ENCODE measurements at regions of chr17 and their contacts with region 1.

Region 1: DNA sequence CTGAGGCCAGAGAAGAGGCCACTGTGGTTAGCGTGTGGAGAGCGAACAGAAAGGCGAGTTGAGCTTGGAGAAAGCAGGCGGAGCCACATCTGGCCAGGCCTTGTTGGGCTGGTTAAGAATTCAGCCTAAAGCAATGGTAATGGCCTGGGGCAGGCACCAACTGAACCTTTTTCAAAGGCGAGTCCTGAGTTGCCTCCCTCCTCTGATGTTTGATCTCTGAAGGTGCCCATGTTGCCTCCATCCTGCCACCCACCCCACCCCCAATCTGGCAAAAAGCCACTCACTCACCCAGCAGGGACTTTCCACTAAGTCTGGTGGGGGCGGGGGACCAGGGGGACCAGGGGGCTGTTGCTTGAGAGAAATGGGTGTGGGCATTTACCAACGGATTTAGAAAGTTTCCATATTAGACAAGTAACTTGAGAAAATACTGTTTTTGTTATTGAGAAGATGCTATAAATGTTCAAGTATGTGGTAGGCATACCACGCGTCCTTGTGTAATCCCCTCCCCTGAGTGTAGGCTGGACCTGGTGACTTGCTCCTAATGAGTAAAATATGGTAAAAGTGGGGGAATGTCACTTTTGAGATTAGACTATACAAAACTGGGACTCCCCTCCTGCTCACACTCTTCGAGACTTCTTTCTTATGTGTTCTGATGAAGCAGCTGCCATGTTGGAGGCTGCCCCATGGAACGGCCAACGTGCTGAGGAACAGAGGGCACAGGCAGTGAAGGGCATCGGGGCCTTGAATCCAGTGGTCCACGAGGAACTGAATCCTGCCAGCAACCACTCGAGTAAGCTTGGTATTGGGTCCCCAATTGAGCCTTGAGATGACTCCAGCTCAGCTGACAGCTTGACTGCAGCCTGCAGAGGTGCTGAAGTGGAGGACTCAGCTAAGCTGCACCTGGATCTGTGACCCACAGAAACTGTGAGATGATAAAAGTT is 29.9 kb upstream of the TNS4 start:
- DNase-seq: no peak
- H3K4me3 Mint-ChIP-seq: no peak overlapping the region
- H3K27ac Mint-ChIP-seq: no peak overlapping the region
- H3K4me1 Mint-ChIP-seq: peaks cover 19% of the 10 kb centered on the region
- H3K27me3 Mint-ChIP-seq: peaks cover 48% of the 10 kb centered on the region
- CTCF ChIP-seq: no peak

Region 2: GRCh38 chr17:39952680-39953470 is 578.4 kb before region 1 on chr17:
- CTCF ChIA-PET with region 1: interaction called, 16 read pairs
- intact Hi-C with region 1: no loop called
- DNase-seq: peak; percentile 100
- H3K4me3 Mint-ChIP-seq: peak overlapping the region; percentile 58
- H3K27ac Mint-ChIP-seq: peak overlapping the region; percentile 18
- H3K4me1 Mint-ChIP-seq: peaks cover 42% of the 10 kb centered on the region
- H3K27me3 Mint-ChIP-seq: peaks cover 15% of the 10 kb centered on the region
- CTCF ChIP-seq: no peak

Region 3: DNA sequence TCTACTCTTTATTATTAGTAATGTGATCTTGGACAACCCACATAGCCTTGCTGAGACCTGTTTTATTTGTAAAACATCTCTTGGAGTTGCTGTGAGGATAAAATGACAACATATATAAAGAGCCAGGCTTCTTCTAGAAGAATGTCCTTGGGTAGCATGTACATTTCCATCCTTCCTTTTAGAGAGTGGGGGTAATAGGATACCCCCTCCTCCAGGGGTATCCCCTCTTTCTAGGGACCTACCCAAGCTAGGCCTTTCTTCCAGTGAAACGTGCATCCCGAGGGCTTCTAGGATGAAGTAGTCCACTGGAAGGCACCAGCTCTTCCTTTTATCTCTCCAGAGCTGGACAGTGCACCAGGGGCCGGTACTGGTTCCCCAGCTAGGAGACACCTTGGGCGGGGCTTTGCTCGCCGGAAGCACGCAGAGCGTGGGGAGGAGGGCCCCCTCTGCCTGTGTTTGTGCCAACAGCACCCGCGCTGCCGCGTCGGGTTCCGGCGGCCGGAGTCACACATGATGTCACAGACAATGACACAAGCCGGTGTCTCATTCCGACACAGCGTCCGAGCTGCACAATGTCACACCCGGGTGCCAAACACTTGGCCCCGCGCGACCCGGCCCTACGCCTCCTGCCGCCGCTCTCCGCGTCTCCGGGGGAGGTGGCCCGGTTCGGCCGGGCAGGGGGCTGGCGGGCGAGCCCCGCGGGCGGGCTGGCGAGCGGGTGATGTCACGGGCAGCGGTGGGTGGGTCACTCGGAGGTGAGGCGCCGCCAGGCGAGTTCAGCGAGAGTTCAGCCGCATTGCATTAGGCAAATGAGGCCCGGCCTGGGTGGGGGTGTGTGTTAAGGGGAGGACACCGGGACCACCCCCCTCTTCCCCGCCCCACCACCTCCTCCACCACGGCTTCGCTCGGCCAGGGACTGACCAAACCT is 190.2 kb before region 1 on chr17:
- CTCF ChIA-PET with region 1: interaction called, 12 read pairs
- intact Hi-C with region 1: no loop called
- DNase-seq: peak; percentile 100
- H3K4me3 Mint-ChIP-seq: peak overlapping the region; percentile 89
- H3K27ac Mint-ChIP-seq: peak overlapping the region; percentile 75
- H3K4me1 Mint-ChIP-seq: peaks cover 57% of the 10 kb centered on the region
- H3K27me3 Mint-ChIP-seq: no peaks in the 10 kb centered on the region
- CTCF ChIP-seq: peak; percentile 92

Region 4: DNA sequence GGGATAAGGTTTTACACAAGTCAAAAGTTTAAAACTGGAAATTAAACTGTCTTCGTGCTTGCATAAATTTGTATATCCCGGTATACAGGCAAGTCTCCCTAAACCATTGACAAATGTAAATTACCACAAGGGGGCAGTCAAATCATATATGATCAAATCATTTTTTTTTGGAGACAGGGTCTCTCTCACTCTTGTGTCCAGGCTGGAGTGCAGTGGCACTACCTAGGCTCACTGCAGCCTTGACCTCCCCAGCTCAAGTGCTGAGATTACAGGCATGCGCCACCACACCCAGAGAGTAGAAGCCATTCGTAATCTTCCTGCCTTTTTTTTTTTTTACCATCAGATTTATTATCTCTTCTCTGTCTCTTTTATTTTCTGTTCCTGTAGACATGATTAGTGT is 132.1 kb before region 1 on chr17:
- CTCF ChIA-PET with region 1: interaction called, 21 read pairs
- intact Hi-C with region 1: loop called (anchors 1 kb)
- DNase-seq: no peak
- H3K4me3 Mint-ChIP-seq: no peak overlapping the region
- H3K27ac Mint-ChIP-seq: no peak overlapping the region
- H3K4me1 Mint-ChIP-seq: no peaks in the 10 kb centered on the region
- H3K27me3 Mint-ChIP-seq: no peaks in the 10 kb centered on the region
- CTCF ChIP-seq: no peak

Region 5: GRCh38 chr17:40450175-40450574 is 81.1 kb before region 1 on chr17:
- CTCF ChIA-PET with region 1: interaction called, 4,142 read pairs
- intact Hi-C with region 1: loop called (anchors 2 kb)
- DNase-seq: peak; percentile 100
- H3K4me3 Mint-ChIP-seq: no peak overlapping the region
- H3K27ac Mint-ChIP-seq: no peak overlapping the region
- H3K4me1 Mint-ChIP-seq: peaks cover 48% of the 10 kb centered on the region
- H3K27me3 Mint-ChIP-seq: peaks cover 17% of the 10 kb centered on the region
- CTCF ChIP-seq: no peak

Region 6: DNA sequence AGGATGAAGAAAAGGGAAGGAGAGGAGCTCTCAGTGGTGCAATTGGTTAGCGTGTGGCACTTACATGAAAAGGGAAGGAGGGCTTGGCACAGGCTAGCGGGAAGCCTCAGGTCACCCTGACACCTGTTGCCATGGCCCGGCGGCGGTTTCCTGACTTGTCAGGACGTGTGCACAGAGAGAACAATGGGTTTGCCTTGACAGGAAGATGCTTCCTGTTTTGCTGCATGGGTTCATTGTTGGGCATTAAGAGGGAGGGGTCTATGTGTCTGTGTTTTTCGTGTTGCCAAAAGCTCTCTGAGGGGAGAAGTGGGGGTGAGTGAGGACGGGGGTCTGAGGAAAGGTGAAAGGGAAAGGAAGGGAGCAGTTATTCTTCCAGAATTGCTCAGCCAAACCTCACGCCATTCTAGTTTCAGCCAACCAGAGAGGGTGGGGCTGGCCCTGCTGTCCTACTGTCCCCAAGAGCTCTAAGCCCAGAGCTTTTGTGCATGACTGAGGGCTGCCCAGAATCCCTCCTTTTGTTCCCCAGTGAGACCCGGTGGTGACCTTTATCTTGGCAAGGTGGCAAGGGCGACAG is 51.1 kb after region 1 on chr17:
- CTCF ChIA-PET with region 1: interaction called, 14 read pairs
- intact Hi-C with region 1: no loop called
- DNase-seq: peak; percentile 60
- H3K4me3 Mint-ChIP-seq: no peak overlapping the region
- H3K27ac Mint-ChIP-seq: no peak overlapping the region
- H3K4me1 Mint-ChIP-seq: peaks cover 8% of the 10 kb centered on the region
- H3K27me3 Mint-ChIP-seq: peaks cover 93% of the 10 kb centered on the region
- CTCF ChIP-seq: no peak